B cell (primary cell): ENCODE measurements at regions of chr15 and their contacts with region 1.

Region 1: DNA sequence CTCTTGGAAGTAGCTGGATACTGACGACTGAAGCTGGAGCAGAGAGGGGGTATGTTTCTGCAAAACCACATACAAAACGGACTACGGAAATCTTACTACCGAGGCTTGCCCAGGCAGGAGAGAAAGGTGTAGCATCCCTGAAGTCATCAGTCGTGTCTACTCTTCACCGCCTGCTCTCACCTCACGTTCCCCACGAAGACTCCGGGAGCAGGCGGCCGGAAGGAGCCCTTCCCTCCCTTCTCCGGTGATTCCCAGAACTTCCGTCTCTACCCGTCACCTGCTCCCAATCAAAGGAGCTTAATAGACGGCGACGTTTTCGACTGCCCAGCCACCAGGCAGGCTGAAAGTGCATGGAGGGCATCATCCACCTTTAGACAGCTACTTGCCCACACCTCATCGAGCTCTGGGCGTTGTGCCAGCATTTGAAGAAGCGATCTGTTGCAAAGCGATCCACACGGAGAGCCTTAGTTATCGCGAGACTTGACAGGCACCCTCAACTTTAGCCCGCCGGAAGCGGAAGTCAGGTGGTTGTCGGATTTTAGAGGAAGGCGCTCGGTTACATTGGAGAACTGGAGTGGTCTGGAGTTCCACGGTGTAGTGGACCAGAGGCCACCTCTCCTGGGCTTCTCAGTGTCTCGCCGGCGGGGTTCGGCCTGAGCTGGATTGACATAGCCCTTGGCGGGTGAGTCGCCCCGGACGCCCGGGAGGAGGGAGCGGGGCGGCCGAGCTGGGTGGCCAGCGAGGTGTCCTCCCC is at the start of gene RAMAC:
- DNase-seq: peak; percentile 97
- ATAC-seq: peak; percentile 94
- H3K4me3 ChIP-seq: peak within 1 kb of the TSS; percentile 77 to 92 (median 82)
- H3K4me3 Mint-ChIP-seq: peak within 1 kb of the TSS; percentile 100
- H3K27ac ChIP-seq: peak within 1 kb of the TSS; percentile 65 to 83
- H3K27ac Mint-ChIP-seq: peak within 1 kb of the TSS; percentile 97
- H3K4me1 ChIP-seq: peaks cover 12 to 17% of the 10 kb centered on the region in 2 donors
- H3K4me1 Mint-ChIP-seq: peaks cover 24% of the 10 kb centered on the region
- H3K27me3 ChIP-seq: no peaks in the 10 kb centered on the region
- H3K27me3 Mint-ChIP-seq: no peaks in the 10 kb centered on the region
- CTCF ChIP-seq: no peak
- total RNA-seq, gene RAMAC: 20.2 and 20.8 TPM in 2 replicates

Region 2: DNA sequence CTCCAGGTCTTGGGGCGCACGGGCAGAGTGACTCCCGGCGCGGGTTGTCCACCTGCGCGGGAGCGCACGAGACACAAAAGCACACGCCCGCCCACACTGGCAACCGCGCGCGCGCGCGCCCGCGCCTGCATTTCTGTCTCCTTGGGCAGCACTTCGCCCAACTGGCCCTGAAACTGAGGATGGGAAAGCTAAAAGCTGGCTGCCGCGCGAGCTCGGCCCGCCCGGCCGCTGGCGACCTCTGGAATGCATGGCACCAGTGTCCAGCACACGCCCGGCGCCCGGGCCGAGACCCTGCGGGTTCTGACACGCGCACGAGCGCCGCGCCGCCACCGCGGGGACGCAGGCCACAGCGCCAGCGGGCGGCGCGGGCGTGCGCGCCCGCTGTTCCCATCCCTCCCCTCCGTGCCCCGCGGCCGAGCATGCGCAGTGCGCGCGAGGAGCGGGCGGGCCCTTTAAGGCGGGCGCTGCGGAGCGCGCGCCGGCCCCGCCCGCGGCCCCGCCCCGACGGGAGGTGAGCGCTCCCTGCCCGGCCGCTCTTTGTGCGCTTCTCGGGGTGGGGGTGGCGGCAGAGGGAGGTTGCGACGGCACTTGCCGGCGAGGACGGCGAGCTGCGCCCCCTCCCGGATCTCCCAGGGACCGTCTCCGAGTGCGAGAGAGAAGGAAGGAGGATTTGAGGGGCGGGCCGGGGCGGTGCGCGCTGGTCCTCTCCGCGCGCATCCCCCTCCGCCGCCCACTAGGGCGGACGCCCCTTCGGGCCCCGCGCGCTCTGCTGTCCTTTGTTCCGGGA is 939.0 kb before region 1 on chr15:
- CTCF ChIA-PET with region 1: no interaction called
- POLR2A ChIA-PET with region 1: no interaction called
- intact Hi-C with region 1: loop called (anchors 5 kb)
- DNase-seq: peak; percentile 90
- ATAC-seq: peak; percentile 79
- H3K4me3 ChIP-seq: peak overlapping the region; percentile 68 to 87 (median 84)
- H3K4me3 Mint-ChIP-seq: peak overlapping the region; percentile 92
- H3K27ac ChIP-seq: peak overlapping the region; percentile 65 to 77
- H3K27ac Mint-ChIP-seq: peak overlapping the region; percentile 56
- H3K4me1 ChIP-seq: peaks cover 19 to 28% of the 10 kb centered on the region in 2 donors
- H3K4me1 Mint-ChIP-seq: peaks cover 20% of the 10 kb centered on the region
- H3K27me3 ChIP-seq: peaks cover 0 to 29% (median 15%) of the 10 kb centered on the region in 4 experiments
- H3K27me3 Mint-ChIP-seq: peaks cover 35% of the 10 kb centered on the region
- CTCF ChIP-seq: peak; percentile 49

Region 3: GRCh38 chr15:82749951-82750830 is 235.7 kb before region 1 on chr15:
- CTCF ChIA-PET with region 1: no interaction called
- POLR2A ChIA-PET with region 1: interaction called, 7 read pairs
- intact Hi-C with region 1: loop called (anchors 5 kb)
- DNase-seq: peak; percentile 86
- ATAC-seq: peak; percentile 95
- H3K4me3 ChIP-seq: peak overlapping the region; percentile 75 to 97 (median 79)
- H3K4me3 Mint-ChIP-seq: peak overlapping the region; percentile 98
- H3K27ac ChIP-seq: peak overlapping the region; percentile 72 to 82
- H3K27ac Mint-ChIP-seq: peak overlapping the region; percentile 90
- H3K4me1 ChIP-seq: peaks cover 16 to 20% of the 10 kb centered on the region in 2 donors
- H3K4me1 Mint-ChIP-seq: peaks cover 41% of the 10 kb centered on the region
- H3K27me3 ChIP-seq: no peaks in the 10 kb centered on the region
- H3K27me3 Mint-ChIP-seq: no peaks in the 10 kb centered on the region
- CTCF ChIP-seq: no peak

Region 4: GRCh38 chr15:82809404-82810060 is 176.3 kb before region 1 on chr15 and contains the start of gene WHAMM:
- CTCF ChIA-PET with region 1: interaction called, 5 read pairs
- POLR2A ChIA-PET with region 1: interaction called, 4 read pairs
- intact Hi-C with region 1: loop called (anchors 1 kb)
- DNase-seq: peak; percentile 97
- ATAC-seq: peak; percentile 89
- H3K4me3 ChIP-seq: peak within 1 kb of the TSS; percentile 82 to 96 (median 86)
- H3K4me3 Mint-ChIP-seq: peak within 1 kb of the TSS; percentile 86
- H3K27ac ChIP-seq: peak within 1 kb of the TSS; percentile 91 to 99
- H3K27ac Mint-ChIP-seq: peak within 1 kb of the TSS; percentile 95
- H3K4me1 ChIP-seq: peaks cover 31 to 41% of the 10 kb centered on the region in 2 donors
- H3K4me1 Mint-ChIP-seq: peaks cover 54% of the 10 kb centered on the region
- H3K27me3 ChIP-seq: no peaks in the 10 kb centered on the region
- H3K27me3 Mint-ChIP-seq: no peaks in the 10 kb centered on the region
- CTCF ChIP-seq: no peak
- total RNA-seq, gene WHAMM: 29.9 and 31.3 TPM in 2 replicates

Region 5: DNA sequence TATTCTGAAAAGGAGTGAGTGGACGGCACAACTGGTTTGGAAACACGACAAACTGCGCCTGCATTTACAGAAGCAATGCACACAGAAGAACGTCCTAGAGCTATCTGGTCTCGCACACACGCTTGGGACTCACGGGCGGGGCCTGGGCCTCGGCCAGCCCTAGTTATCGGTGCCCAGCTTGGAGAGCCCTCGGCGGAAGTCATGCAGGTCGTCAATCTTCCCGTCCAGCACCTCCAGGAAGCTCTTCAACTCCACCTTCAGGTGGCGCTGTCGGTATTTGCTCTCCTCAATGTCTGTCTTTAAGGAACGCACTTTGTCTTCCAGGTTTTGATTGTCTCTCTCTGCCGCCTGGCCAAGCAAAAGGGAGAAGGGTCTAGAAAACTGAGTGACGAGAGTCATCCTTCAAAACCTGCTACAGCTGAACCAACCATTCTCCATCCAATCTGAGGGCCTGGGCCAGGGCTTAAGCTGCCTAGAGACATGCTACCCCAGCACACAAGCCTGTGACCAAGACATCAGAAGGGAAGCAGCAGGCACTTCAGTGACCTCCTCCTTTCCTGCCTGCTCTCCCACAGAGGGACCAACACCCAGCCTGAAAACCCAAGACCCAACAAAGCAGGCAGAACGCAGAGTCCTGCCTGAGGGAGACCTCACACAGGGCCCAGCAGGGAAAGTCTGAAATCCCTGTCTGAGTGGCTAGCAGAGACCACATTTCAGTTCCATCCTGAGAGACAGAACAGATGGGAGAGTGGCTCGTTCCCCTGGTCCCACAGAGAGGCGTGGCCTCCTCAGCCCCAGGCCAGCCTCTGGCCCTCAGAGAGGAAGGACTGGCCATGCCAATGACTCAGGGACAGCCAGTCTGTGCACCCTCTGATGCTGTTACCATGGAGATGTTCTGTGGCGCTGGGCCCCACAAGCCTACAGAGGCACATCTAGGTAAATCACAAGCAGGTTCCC is 136.0 kb before region 1 on chr15:
- CTCF ChIA-PET with region 1: interaction called, 15 read pairs
- POLR2A ChIA-PET with region 1: no interaction called
- intact Hi-C with region 1: loop called (anchors 2 kb)
- DNase-seq: peak; percentile 72
- ATAC-seq: peak; percentile 22
- H3K4me3 ChIP-seq: no peak overlapping the region
- H3K4me3 Mint-ChIP-seq: peak overlapping the region; percentile 52
- H3K27ac ChIP-seq: no peak overlapping the region
- H3K27ac Mint-ChIP-seq: peak overlapping the region; percentile 66
- H3K4me1 ChIP-seq: peaks cover 6 to 23% of the 10 kb centered on the region in 2 donors
- H3K4me1 Mint-ChIP-seq: peaks cover 31% of the 10 kb centered on the region
- H3K27me3 ChIP-seq: no peaks in the 10 kb centered on the region
- H3K27me3 Mint-ChIP-seq: no peaks in the 10 kb centered on the region
- CTCF ChIP-seq: peak; percentile 73

Region 6: DNA sequence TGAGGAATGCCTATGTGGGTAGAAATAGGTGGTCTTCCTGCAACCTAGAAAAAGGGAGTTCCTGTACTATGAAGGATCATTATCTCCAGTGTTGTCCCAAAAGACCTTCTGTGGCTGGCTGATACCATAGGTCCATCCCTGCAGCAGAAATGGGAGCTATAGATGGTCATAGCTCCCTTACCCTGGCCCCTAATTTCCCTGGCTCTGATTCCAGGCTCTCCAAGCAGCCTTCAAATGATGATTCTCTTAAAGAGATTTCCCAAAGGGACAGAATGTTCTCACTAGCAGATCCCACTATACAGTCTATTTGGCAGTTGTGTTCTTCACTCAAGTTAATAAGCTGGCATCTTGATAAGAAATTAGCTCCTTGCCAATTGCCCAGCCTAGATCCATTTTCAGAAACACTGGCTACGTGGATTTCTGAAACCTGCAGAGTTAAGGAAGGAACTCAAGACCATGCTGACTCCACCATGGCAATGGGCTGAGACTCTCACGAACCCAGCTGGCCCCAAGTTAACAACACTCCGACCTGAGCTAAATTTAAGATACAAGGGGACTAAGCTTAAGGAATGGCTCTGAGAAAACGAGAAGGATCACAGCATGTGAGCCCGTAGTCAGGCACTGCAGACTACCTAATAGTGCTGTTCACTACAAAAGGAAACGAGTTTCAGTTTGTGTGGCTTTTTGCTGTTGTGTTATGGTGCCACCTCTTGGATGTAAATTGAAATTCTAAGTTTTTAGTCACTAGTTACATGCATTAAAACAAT is 14.2 kb after region 1 on chr15:
- CTCF ChIA-PET with region 1: interaction called, 27 read pairs
- POLR2A ChIA-PET with region 1: no interaction called
- intact Hi-C with region 1: no loop called
- DNase-seq: peak; percentile 68
- ATAC-seq: peak; percentile 83
- H3K4me3 ChIP-seq: peak overlapping the region in 3 of 5 experiments; percentile 29 to 44 (median 40)
- H3K4me3 Mint-ChIP-seq: peak overlapping the region; percentile 88
- H3K27ac ChIP-seq: peak overlapping the region in 1 of 2 donors; percentile 62
- H3K27ac Mint-ChIP-seq: peak overlapping the region; percentile 91
- H3K4me1 ChIP-seq: peaks cover 6 to 8% of the 10 kb centered on the region in 2 donors
- H3K4me1 Mint-ChIP-seq: peaks cover 7% of the 10 kb centered on the region
- H3K27me3 ChIP-seq: no peaks in the 10 kb centered on the region
- H3K27me3 Mint-ChIP-seq: no peaks in the 10 kb centered on the region
- CTCF ChIP-seq: peak; percentile 72